ENCODE measurements at regions of chr1 and their contacts with region 1.

Region 1: DNA sequence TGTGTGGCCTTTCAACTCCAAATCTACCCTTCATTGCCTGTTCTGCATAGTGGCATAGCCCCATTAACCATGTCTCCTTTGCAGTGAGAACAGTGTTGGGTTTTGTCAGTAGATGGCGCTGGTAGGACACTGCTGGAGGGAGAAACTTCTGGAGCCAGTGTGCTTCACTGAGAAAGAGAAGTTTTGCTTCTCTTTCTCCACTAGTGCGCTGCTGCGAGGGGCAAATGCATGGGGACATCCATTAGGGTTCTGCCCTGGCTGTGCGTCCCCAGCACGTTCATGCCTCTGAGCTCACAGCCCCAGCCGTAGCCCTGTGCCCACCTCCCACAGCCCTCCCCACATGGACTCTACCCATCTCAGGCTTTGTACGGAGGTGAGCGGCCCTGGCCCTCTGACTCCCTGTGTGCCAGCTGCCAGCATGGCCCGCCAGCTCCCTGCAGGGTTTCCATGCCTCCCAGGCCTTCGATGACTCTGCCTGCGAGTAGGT is 53.1 kb downstream of the RIMS3 start:
- DNase-seq: peak; percentile 84
- ATAC-seq: peak; percentile 89
- H3K4me3 Mint-ChIP-seq: no peak overlapping the region
- H3K27ac Mint-ChIP-seq: no peak overlapping the region
- H3K4me1 Mint-ChIP-seq: no peaks in the 10 kb centered on the region
- H3K27me3 Mint-ChIP-seq: peaks cover 9% of the 10 kb centered on the region

Region 2: GRCh38 chr1:40627987-40628902 is 15.9 kb after region 1 on chr1:
- CTCF ChIA-PET with region 1: interaction called, 10 read pairs
- DNase-seq: peak; percentile 71
- ATAC-seq: peak; percentile 71
- H3K4me3 Mint-ChIP-seq: no peak overlapping the region
- H3K27ac Mint-ChIP-seq: peak overlapping the region; percentile 69
- H3K4me1 Mint-ChIP-seq: peaks cover 28% of the 10 kb centered on the region
- H3K27me3 Mint-ChIP-seq: no peaks in the 10 kb centered on the region

Region 3: GRCh38 chr1:40650075-40650474 is 37.7 kb after region 1 on chr1:
- CTCF ChIA-PET with region 1: no interaction called
- DNase-seq: no peak
- ATAC-seq: peak; percentile 57
- H3K4me3 Mint-ChIP-seq: no peak overlapping the region
- H3K27ac Mint-ChIP-seq: no peak overlapping the region
- H3K4me1 Mint-ChIP-seq: no peaks in the 10 kb centered on the region
- H3K27me3 Mint-ChIP-seq: no peaks in the 10 kb centered on the region

Region 4: GRCh38 chr1:40668769-40669525 is 56.6 kb after region 1 on chr1:
- CTCF ChIA-PET with region 1: interaction called, 21 read pairs
- DNase-seq: peak; percentile 89
- ATAC-seq: peak; percentile 50
- H3K4me3 Mint-ChIP-seq: no peak overlapping the region
- H3K27ac Mint-ChIP-seq: peak overlapping the region; percentile 43
- H3K4me1 Mint-ChIP-seq: peaks cover 13% of the 10 kb centered on the region
- H3K27me3 Mint-ChIP-seq: no peaks in the 10 kb centered on the region